ENCODE measurements at regions of chr22 and their contacts with region 1.

Region 1: DNA sequence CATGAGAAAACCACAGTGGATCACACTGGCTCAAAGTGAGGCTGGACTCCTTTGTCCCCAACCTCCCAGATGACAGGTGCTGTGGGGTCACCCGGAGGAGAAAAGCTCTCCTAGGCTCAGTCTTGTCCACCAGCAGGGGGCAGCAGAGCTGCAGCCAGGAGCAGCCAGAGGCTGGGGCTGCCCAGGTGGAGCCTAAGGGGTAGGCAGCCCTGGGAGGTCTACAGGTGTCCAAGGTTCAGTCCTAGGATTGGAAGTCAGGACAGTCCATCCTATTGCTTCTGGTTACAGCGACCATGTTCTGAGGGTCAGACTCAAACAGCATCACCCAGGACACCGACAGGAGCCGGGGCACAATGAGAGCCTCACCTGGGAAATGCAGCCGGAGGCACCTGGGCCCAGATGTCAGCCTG is 77.6 kb upstream of the IGLL5 start:
- DNase-seq: peak; percentile 84
- ATAC-seq: peak; percentile 76
- H3K4me3 ChIP-seq: peak overlapping the region in 1 of 5 experiments; percentile 1
- H3K4me3 Mint-ChIP-seq: no peak overlapping the region
- H3K27ac ChIP-seq: no peak overlapping the region
- H3K27ac Mint-ChIP-seq: no peak overlapping the region
- H3K4me1 ChIP-seq: peaks cover 9 to 26% of the 10 kb centered on the region in 2 donors
- H3K4me1 Mint-ChIP-seq: peaks cover 24% of the 10 kb centered on the region
- H3K27me3 ChIP-seq: peaks cover 0 to 9% (median 0%) of the 10 kb centered on the region in 4 experiments
- H3K27me3 Mint-ChIP-seq: peaks cover 12% of the 10 kb centered on the region
- CTCF ChIP-seq: peak; percentile 91

Region 2: GRCh38 chr22:22787786-22788459 is 22.1 kb before region 1 on chr22:
- CTCF ChIA-PET with region 1: interaction called, 20 read pairs
- POLR2A ChIA-PET with region 1: no interaction called
- intact Hi-C with region 1: loop called (anchors 2 kb)
- DNase-seq: peak; percentile 76
- ATAC-seq: peak; percentile 84
- H3K4me3 ChIP-seq: no peak overlapping the region
- H3K4me3 Mint-ChIP-seq: no peak overlapping the region
- H3K27ac ChIP-seq: no peak overlapping the region
- H3K27ac Mint-ChIP-seq: no peak overlapping the region
- H3K4me1 ChIP-seq: peaks cover 0 to 3% of the 10 kb centered on the region in 2 donors
- H3K4me1 Mint-ChIP-seq: no peaks in the 10 kb centered on the region
- H3K27me3 ChIP-seq: peaks cover 0 to 3% (median 0%) of the 10 kb centered on the region in 4 experiments
- H3K27me3 Mint-ChIP-seq: peaks cover 12% of the 10 kb centered on the region
- CTCF ChIP-seq: peak; percentile 81

Region 3: GRCh38 chr22:22830957-22831688 is 21.1 kb after region 1 on chr22:
- CTCF ChIA-PET with region 1: no interaction called
- POLR2A ChIA-PET with region 1: no interaction called
- intact Hi-C with region 1: no loop called
- DNase-seq: no peak
- ATAC-seq: no peak
- H3K4me3 ChIP-seq: no peak overlapping the region
- H3K4me3 Mint-ChIP-seq: no peak overlapping the region
- H3K27ac ChIP-seq: no peak overlapping the region
- H3K27ac Mint-ChIP-seq: no peak overlapping the region
- H3K4me1 ChIP-seq: no peaks in the 10 kb centered on the region
- H3K4me1 Mint-ChIP-seq: no peaks in the 10 kb centered on the region
- H3K27me3 ChIP-seq: no peaks in the 10 kb centered on the region
- H3K27me3 Mint-ChIP-seq: peaks cover 31% of the 10 kb centered on the region
- CTCF ChIP-seq: no peak

Region 4: GRCh38 chr22:22855617-22856308 is 45.7 kb after region 1 on chr22:
- CTCF ChIA-PET with region 1: interaction called, 15 read pairs
- POLR2A ChIA-PET with region 1: no interaction called
- intact Hi-C with region 1: loop called (anchors 5 kb)
- DNase-seq: peak; percentile 72
- ATAC-seq: peak; percentile 74
- H3K4me3 ChIP-seq: no peak overlapping the region
- H3K4me3 Mint-ChIP-seq: peak overlapping the region; percentile 47
- H3K27ac ChIP-seq: no peak overlapping the region
- H3K27ac Mint-ChIP-seq: peak overlapping the region; percentile 71
- H3K4me1 ChIP-seq: peaks cover 35 to 39% of the 10 kb centered on the region in 2 donors
- H3K4me1 Mint-ChIP-seq: peaks cover 34% of the 10 kb centered on the region
- H3K27me3 ChIP-seq: peaks cover 0 to 1% (median 0%) of the 10 kb centered on the region in 4 experiments
- H3K27me3 Mint-ChIP-seq: peaks cover 16% of the 10 kb centered on the region
- CTCF ChIP-seq: peak; percentile 72

Region 5: DNA sequence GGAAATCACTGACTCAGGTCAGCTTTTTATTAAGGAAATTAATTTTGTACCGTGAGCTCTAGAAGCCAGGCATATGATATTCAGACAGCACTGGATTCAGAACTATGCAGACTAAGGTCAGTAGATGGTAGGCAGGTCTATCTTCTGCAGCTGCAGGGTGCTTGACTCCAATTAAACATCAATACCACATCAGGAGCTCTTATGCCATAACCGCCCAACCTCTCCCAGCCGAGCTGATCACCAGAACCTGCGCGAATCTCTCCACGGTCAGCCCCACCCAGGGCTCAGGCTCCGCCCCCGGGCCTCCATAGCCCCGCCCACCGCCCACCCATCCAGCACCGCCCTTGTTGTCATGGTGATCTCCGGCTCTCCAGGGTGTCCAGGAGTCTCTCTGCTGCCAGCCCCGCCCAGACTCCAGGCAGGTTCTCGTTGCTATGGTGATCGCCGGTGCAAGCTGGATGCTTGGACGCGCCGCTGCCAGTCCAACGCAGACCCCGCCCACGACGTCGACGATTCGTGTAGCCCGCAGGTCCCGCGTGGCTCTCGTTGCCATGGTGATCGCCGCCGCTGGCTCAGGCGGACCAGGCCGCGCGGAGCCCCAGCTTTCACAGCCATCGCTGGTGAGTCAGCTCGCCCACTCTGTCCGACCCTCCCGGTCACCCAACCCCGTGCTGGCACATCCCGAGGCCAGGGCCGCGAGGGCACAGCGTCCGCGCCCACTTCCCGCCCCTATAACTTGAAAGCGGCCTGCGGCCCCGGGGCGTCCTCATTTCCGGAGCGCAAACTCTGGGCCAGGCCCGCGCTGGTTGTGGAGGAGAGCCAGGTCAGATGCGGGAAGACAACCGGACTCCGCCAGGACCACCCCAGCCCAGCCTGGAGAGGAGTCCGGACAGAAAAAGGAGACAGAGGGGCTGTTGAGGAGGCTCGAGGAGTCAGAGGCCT is 335.2 kb after region 1 on chr22 and contains the start of gene RAB36:
- CTCF ChIA-PET with region 1: no interaction called
- POLR2A ChIA-PET with region 1: no interaction called
- intact Hi-C with region 1: no loop called
- DNase-seq: peak; percentile 99
- ATAC-seq: peak; percentile 60
- H3K4me3 ChIP-seq: peak within 1 kb of the TSS; percentile 16 to 52 (median 43)
- H3K4me3 Mint-ChIP-seq: peak within 1 kb of the TSS; percentile 89
- H3K27ac ChIP-seq: peak within 1 kb of the TSS; percentile 65 to 83
- H3K27ac Mint-ChIP-seq: peak within 1 kb of the TSS; percentile 96
- H3K4me1 ChIP-seq: peaks cover 41 to 58% of the 10 kb centered on the region in 2 donors
- H3K4me1 Mint-ChIP-seq: peaks cover 44% of the 10 kb centered on the region
- H3K27me3 ChIP-seq: no peaks in the 10 kb centered on the region
- H3K27me3 Mint-ChIP-seq: no peaks in the 10 kb centered on the region
- CTCF ChIP-seq: no peak
- total RNA-seq, gene RAB36: 1.9 and 3.3 TPM in 2 replicates

Measured in B cell (primary cell).